Posterior vena cava (tissue), 2 donors: ENCODE measurements at regions of chr14 and their contacts with region 1.

Region 1: DNA sequence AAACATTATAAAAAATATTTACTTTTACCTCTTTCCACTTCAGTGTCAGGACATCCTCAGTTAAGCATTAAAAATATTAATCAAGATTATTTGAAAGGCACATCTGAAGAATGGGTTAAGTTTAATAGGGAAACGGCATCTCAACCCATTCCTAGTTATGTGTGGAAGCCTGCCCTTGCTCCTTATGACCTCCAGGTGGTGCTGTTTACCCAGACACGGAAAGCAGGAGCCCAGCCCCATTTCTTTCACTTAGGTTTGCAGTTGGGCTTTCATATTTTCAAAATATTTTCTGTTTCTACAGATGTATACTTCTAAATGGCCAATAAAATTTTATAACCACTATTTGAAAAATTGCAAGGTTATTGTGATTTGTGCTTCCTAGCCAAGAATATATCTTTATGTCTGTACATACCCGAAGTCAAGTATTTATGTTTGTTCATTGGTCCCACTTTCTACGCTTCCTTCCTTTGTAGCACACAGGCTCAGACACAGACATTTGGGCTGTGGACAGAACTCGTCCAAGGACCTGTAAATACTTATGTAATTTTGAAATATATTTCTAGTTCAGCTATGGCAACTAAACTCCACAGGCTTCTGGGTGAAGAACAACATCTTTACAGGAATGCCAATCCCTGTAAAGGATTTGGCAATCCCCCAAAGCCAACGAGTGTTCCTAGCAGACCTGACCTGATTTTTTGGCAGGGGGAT is 247.1 kb downstream of the AKAP6 start:
- DNase-seq: no peak

Region 2: DNA sequence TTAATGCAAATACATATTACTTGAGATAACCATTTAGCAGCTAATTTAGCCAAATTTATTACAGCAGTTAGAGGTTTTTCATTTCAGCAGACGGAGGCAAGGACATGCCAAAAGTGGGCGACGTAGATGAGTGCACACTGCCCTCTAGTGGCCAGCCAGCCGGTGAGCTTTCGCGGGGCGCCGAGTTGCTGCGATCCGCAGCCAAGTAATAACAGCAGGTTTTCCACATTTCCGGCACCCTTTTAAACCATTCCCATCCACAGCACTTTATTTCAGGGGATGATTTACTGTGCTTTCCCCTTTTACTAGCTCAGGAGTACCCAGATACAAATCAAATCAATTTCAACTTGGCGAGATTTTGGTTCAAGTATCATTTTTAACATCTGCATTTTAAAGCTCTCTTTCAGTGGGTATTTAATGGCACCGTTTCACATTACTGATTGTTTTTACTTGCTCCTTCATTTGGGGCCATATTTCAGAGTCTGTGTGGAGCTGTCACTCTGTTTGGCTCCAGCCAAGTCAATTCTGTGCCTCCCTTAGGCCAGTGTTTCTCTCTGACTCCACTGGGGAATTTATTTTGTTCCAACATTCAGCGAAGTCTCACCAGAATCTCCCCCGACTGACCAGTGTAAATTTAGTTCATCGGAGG is 1216.6 kb after region 1 on chr14:
- intact Hi-C with region 1: loop called (anchors 5 to 10 kb)
- DNase-seq: peak; percentile 94